ENCODE measurements at regions of chr5 and their contacts with region 1.

Region 1: GRCh38 chr5:150758531-150759333 is at the start of gene DCTN4:
- DNase-seq: peak; percentile 96
- ATAC-seq: peak; percentile 96
- H3K4me3 Mint-ChIP-seq: no peak within 1 kb of the TSS
- H3K27ac Mint-ChIP-seq: no peak within 1 kb of the TSS
- H3K4me1 Mint-ChIP-seq: peaks cover 35% of the 10 kb centered on the region
- H3K27me3 Mint-ChIP-seq: peaks cover 3% of the 10 kb centered on the region
- CTCF ChIP-seq: no peak
- total RNA-seq, gene DCTN4: 30.1 to 35.5 TPM

Region 2: GRCh38 chr5:150000256-150000989 is 758.3 kb before region 1 on chr5 and contains the starts of genes HMGXB3 and TIGD6:
- CTCF ChIA-PET with region 1: no interaction called
- POLR2A ChIA-PET with region 1: no interaction called
- intact Hi-C with region 1: loop called (anchors 10 kb)
- DNase-seq: peak; percentile 94
- ATAC-seq: peak; percentile 88
- H3K4me3 Mint-ChIP-seq: peak within 1 kb of the TSS; percentile 93
- H3K27ac Mint-ChIP-seq: peak within 1 kb of the TSS; percentile 95
- H3K4me1 Mint-ChIP-seq: peaks cover 42% of the 10 kb centered on the region
- H3K27me3 Mint-ChIP-seq: no peaks in the 10 kb centered on the region
- CTCF ChIP-seq: no peak
- total RNA-seq, gene HMGXB3: 30.4 to 32.6 TPM
- total RNA-seq, gene TIGD6: 1.2 to 2.2 TPM

Measured in activated CD8-positive, alpha-beta T cell treated with anti-CD3 and anti-CD28 coated beads for 36 hours (primary cell).